WTC11 (cell line): ENCODE measurements at regions of chr7 and their contacts with region 1.

Region 1: DNA sequence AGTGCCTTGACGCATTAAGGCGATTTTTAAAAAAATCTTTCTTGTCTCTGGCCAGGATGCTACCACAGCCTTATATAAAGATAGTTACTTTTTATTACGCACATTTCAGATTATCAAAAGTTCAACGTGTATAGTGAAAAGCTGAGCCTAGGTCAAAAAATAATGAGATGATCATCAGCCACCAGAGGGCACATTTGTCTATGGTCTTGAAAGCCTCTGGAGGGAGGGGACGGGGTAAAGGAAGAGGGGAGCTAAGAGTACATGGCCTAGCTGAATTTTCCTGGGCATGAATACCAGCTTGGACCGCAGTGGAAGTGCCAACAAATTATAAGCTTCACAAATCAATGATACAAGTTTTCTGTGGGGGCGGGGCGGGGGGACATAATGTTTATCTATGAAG is 285.9 kb upstream of the SMIM30 start:
- DNase-seq: peak; percentile 24
- ATAC-seq: peak; percentile 93
- H3K4me3 Mint-ChIP-seq: no peak overlapping the region
- H3K27ac Mint-ChIP-seq: no peak overlapping the region
- H3K4me1 Mint-ChIP-seq: peaks cover 16% of the 10 kb centered on the region
- H3K27me3 Mint-ChIP-seq: no peaks in the 10 kb centered on the region
- CTCF ChIP-seq: peak; percentile 23; the same call in 1 of the 2 replicates

Region 2: DNA sequence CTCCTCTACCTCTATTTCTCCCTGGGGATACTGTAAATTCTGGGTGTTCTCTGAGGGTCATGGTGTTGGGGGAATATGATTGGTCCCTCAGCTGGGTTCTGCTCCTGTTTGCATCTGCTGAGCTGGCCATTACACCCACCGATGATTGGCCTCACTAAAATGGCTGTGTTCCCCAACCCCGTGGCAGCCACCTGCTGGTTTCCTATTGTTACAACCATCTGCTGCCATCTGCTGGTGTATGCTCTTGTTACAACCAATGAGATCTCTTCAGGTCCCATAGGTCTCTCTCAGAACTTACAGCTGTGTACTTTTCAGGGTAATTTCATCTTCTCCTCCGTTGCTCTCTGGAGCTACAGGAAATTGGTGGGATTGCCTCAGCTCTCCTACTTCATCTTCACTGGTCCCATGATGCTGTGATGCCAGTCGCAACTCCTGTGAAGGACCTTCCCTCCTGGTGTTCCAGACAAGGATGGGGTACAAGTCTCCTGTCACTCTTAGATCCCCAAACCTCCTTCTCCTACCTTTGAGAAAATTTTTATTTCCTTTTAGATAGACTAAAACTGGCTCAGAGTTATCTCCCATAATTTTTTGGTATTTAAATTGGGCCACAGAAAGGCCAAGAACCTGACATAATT is 17.6 kb after region 1 on chr7:
- CTCF ChIA-PET with region 1: interaction called, 34 read pairs
- POLR2A ChIA-PET with region 1: no interaction called
- DNase-seq: peak; percentile 84
- ATAC-seq: peak; percentile 97
- H3K4me3 Mint-ChIP-seq: no peak overlapping the region
- H3K27ac Mint-ChIP-seq: no peak overlapping the region
- H3K4me1 Mint-ChIP-seq: peaks cover 11% of the 10 kb centered on the region
- H3K27me3 Mint-ChIP-seq: no peaks in the 10 kb centered on the region
- CTCF ChIP-seq: peak; percentile 67

Region 3: GRCh38 chr7:113548561-113548960 is 144.3 kb after region 1 on chr7:
- CTCF ChIA-PET with region 1: no interaction called
- POLR2A ChIA-PET with region 1: no interaction called
- DNase-seq: no peak
- ATAC-seq: no peak
- H3K4me3 Mint-ChIP-seq: no peak overlapping the region
- H3K27ac Mint-ChIP-seq: no peak overlapping the region
- H3K4me1 Mint-ChIP-seq: no peaks in the 10 kb centered on the region
- H3K27me3 Mint-ChIP-seq: no peaks in the 10 kb centered on the region; the same call in 1 of the 2 replicates
- CTCF ChIP-seq: no peak

Region 4: GRCh38 chr7:113710310-113711106 is 306.3 kb after region 1 on chr7:
- CTCF ChIA-PET with region 1: interaction called, 11 read pairs
- POLR2A ChIA-PET with region 1: no interaction called
- DNase-seq: peak; percentile 49
- ATAC-seq: peak; percentile 91
- H3K4me3 Mint-ChIP-seq: no peak overlapping the region
- H3K27ac Mint-ChIP-seq: no peak overlapping the region
- H3K4me1 Mint-ChIP-seq: no peaks in the 10 kb centered on the region
- H3K27me3 Mint-ChIP-seq: no peaks in the 10 kb centered on the region
- CTCF ChIP-seq: peak; percentile 96